ENCODE measurements at regions of chr1 and their contacts with region 1.

Region 1: GRCh38 chr1:154936555-154937084 is at the start of gene PMVK:
- DNase-seq: peak; percentile 90
- ATAC-seq: peak; percentile 90
- H3K4me3 Mint-ChIP-seq: peak within 1 kb of the TSS; percentile 98
- H3K27ac Mint-ChIP-seq: peak within 1 kb of the TSS; percentile 100
- H3K4me1 Mint-ChIP-seq: peaks cover 58% of the 10 kb centered on the region
- H3K27me3 Mint-ChIP-seq: no peaks in the 10 kb centered on the region
- CTCF ChIP-seq: no peak
- total RNA-seq, gene PMVK: 24.6 and 26.3 TPM in 2 replicates

Region 2: DNA sequence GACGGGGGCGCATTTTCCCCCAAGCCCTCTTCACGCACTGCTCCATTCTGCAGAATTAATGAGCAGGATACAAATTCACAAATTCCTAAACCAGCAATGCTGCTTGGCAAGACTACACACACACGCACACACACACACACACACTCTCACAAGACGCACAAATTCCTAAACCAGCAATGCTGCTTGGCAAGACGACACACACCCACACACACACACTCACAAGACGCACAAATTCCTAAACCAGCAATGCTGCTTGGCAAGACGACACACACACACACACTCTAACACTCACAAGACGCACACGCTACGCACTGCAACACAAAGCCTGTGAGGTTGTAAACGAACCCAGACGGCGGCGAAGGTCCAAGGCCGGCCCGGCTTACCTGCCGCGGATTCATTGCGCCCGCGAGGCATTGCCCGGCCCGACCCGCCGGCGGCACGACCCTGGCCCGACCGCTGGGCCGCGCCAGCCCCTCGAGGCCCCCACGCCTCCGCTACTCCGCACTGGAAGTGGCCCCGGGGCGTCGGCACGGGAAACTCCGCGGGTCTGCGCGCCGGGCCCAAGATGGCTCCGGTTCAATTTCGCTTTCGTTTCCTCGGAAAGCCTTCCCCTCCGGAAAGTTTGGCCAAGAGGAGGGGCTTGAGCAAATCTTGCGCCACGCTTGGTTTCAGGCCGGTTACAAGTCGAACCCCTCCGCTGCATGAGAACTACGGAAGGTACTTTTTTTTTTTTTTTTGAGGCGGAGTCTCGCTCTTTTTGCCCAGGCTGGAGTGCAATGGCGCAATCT is 328.8 kb before region 1 on chr1 and contains the start of gene ADAR:
- CTCF ChIA-PET with region 1: no interaction called
- POLR2A ChIA-PET with region 1: interaction called, 3 read pairs
- intact Hi-C with region 1: loop called (anchors 2 kb)
- DNase-seq: peak; percentile 80
- ATAC-seq: peak; percentile 91
- H3K4me3 Mint-ChIP-seq: peak within 1 kb of the TSS; percentile 89
- H3K27ac Mint-ChIP-seq: peak within 1 kb of the TSS; percentile 90
- H3K4me1 Mint-ChIP-seq: peaks cover 73% of the 10 kb centered on the region
- H3K27me3 Mint-ChIP-seq: no peaks in the 10 kb centered on the region
- CTCF ChIP-seq: no peak
- total RNA-seq, gene ADAR: 209 and 216 TPM in 2 replicates

Region 3: DNA sequence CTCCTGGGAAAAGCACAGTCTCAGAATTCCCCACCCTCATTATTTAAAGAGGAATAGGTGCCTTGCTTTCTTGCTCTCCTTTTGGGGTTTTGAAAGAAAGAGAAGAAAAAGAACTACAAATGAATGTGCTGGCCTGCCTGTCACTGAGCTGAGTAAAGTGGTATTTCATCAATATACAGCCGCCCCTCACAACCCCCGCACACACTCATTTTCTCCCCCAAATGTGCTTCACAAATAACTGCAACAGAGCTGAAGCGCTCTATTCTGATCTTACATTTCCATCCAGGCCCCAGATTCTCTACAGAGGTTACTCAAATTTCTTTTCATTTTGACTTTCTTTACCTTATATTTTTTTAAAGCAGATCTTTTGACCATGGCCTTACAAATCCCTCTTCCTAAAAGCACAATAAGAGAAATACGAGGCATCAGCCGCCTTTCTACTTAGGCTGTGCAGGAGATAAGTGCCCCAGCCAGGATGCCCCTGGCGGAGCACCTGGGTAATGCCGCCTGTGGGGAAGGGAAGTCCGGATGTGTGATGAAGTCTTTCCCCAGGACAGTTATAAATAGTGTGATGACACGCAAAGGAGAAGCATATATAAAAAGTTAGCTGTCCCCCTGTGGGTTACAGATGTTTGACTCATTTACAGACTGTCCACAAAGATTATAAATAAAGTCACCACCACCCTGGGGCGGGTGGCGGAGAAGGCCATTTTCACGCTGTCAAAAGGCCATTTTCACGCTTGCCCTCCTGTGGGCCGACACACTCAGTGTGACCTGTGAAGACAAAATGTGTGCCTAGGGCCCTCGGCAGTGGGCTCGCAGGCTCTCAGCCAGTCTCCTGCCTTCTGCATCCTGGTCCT is 73.1 kb before region 1 on chr1:
- CTCF ChIA-PET with region 1: no interaction called
- POLR2A ChIA-PET with region 1: no interaction called
- intact Hi-C with region 1: loop called (anchors 10 kb)
- DNase-seq: no peak
- ATAC-seq: peak; percentile 31
- H3K4me3 Mint-ChIP-seq: peak overlapping the region; percentile 16
- H3K27ac Mint-ChIP-seq: no peak overlapping the region
- H3K4me1 Mint-ChIP-seq: peaks cover 85% of the 10 kb centered on the region
- H3K27me3 Mint-ChIP-seq: peaks cover 17% of the 10 kb centered on the region
- CTCF ChIP-seq: peak; percentile 17

Region 4: DNA sequence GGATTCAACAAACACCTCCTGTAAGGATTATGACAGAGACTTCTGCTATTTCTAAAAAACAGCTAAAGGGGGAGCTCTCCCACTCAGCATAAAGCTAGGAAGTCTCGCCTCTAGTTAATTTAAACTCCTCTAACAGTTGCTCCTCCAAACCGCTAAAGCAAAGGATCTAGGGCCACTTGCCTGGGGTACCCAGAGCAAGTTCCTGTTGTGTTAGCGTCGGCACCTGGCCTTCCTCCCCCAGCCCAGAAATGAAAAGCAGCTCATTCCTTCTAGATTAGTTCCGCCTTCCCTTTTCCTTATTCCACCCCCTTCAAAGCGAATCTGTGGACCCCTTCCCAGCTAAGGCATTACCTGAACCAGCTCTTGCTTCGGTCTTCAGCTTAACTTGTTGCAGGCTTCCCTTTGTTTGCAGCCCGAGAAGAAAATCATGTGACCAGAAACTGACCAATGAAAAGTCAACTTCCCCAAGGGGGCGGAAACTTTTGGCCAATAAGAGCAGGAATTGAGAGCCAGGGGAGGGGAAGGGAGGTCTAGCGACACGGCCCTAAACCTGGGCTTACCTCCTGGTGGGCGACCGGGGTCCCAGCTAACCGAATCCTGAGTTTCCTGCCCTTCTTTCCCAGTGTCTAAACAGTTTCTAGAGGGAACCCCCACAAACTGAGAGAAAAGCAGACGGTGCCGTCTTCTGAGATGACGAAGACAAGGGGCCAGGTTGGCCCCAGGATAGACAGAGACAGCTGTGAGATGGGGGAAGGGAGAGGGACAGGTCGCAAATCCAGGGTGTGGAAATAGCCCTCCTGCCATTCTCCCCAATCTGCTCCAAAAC is 19.3 kb after region 1 on chr1 and contains the start of gene PBXIP1:
- CTCF ChIA-PET with region 1: interaction called, 10 read pairs
- POLR2A ChIA-PET with region 1: interaction called, 52 read pairs
- intact Hi-C with region 1: loop called (anchors 1 kb)
- DNase-seq: peak; percentile 52
- ATAC-seq: peak; percentile 72
- H3K4me3 Mint-ChIP-seq: peak within 1 kb of the TSS; percentile 91
- H3K27ac Mint-ChIP-seq: peak within 1 kb of the TSS; percentile 93
- H3K4me1 Mint-ChIP-seq: peaks cover 81% of the 10 kb centered on the region
- H3K27me3 Mint-ChIP-seq: no peaks in the 10 kb centered on the region
- CTCF ChIP-seq: no peak
- total RNA-seq, gene PBXIP1: 42.4 and 43.2 TPM in 2 replicates

Region 5: GRCh38 chr1:154961497-154962262 is 25.1 kb after region 1 on chr1 and contains the start of gene PYGO2:
- CTCF ChIA-PET with region 1: interaction called, 10 read pairs
- POLR2A ChIA-PET with region 1: interaction called, 52 read pairs
- intact Hi-C with region 1: loop called (anchors 1 kb)
- DNase-seq: peak; percentile 85
- ATAC-seq: peak; percentile 88
- H3K4me3 Mint-ChIP-seq: peak within 1 kb of the TSS; percentile 87
- H3K27ac Mint-ChIP-seq: peak within 1 kb of the TSS; percentile 86
- H3K4me1 Mint-ChIP-seq: peaks cover 45% of the 10 kb centered on the region
- H3K27me3 Mint-ChIP-seq: no peaks in the 10 kb centered on the region
- CTCF ChIP-seq: no peak
- total RNA-seq, gene PYGO2: 33.1 and 38.1 TPM in 2 replicates

Region 6: GRCh38 chr1:154974063-154974807 is 37.6 kb after region 1 on chr1 and contains the start of gene CKS1B:
- CTCF ChIA-PET with region 1: no interaction called
- POLR2A ChIA-PET with region 1: interaction called, 18 read pairs
- intact Hi-C with region 1: loop called (anchors 1 kb)
- DNase-seq: peak; percentile 87
- ATAC-seq: peak; percentile 83
- H3K4me3 Mint-ChIP-seq: no peak within 1 kb of the TSS
- H3K27ac Mint-ChIP-seq: no peak within 1 kb of the TSS
- H3K4me1 Mint-ChIP-seq: peaks cover 36% of the 10 kb centered on the region
- H3K27me3 Mint-ChIP-seq: no peaks in the 10 kb centered on the region
- CTCF ChIP-seq: no peak
- total RNA-seq, gene CKS1B: 25.3 and 26.6 TPM in 2 replicates

Measured in activated B cell treated with CpG ODN at 0.5 μM for 24 hours (primary cell).